Dendritic cell treated with granulocyte-macrophage colony-stimulating factor and Interleukin-4, amounts not matched to agents 40 ng/mL and 50 ng/mL, for 4 days (primary cell): ENCODE measurements at regions of chr12 and their contacts with region 1.

Region 1: DNA sequence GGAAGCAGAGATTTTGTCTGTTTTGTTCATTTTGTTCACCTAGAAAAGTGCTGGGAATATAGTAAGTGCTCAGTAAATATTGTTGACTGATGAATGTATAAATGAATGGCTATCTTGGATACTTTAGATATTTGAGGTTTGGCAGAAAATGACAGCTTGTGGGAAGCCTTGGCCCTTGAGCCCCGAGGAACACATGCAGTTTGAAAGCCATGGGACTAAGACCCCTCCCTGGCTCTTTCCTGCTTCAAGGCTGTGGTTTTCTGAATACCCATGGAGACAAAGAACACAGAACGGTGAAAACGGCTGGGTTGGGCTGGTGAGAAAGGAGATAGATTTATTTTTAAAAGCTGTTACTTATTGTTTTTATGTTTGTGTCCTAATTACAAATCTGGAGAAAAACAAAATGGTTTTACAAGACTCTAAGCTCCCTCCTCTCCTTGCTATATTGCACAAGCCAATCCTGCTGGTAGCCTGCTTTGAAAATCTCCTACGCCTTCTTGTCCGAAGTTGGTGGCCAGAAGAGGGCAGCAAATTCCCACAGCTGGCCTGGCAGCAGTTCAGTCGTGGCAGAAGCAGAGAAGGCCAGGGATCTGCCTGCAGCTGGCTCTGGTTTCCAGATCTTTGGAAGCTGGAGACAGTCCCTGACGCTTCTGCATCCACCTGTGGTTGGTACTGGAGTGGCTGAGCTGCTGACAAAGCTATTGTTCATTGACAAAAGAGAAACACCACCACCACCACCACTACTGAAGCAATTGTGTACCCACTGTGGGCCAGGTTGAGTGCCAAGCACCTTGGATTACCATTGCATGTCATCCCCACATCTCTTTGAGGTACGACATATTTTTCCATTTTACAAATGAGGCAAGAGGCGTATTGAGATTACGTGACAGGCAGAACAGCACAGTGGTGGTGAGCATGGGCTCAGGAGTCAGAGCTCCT is 5.2 kb upstream of the KRT85 start:
- H3K4me3 Mint-ChIP-seq: no peak overlapping the region
- H3K27ac Mint-ChIP-seq: no peak overlapping the region
- H3K4me1 Mint-ChIP-seq: no peaks in the 10 kb centered on the region
- H3K27me3 Mint-ChIP-seq: peaks cover 9% of the 10 kb centered on the region

Region 2: GRCh38 chr12:52338241-52338960 is 34.1 kb before region 1 on chr12:
- intact Hi-C with region 1: no loop called
- H3K4me3 Mint-ChIP-seq: no peak overlapping the region
- H3K27ac Mint-ChIP-seq: no peak overlapping the region
- H3K4me1 Mint-ChIP-seq: no peaks in the 10 kb centered on the region
- H3K27me3 Mint-ChIP-seq: peaks cover 14% of the 10 kb centered on the region

Region 3: DNA sequence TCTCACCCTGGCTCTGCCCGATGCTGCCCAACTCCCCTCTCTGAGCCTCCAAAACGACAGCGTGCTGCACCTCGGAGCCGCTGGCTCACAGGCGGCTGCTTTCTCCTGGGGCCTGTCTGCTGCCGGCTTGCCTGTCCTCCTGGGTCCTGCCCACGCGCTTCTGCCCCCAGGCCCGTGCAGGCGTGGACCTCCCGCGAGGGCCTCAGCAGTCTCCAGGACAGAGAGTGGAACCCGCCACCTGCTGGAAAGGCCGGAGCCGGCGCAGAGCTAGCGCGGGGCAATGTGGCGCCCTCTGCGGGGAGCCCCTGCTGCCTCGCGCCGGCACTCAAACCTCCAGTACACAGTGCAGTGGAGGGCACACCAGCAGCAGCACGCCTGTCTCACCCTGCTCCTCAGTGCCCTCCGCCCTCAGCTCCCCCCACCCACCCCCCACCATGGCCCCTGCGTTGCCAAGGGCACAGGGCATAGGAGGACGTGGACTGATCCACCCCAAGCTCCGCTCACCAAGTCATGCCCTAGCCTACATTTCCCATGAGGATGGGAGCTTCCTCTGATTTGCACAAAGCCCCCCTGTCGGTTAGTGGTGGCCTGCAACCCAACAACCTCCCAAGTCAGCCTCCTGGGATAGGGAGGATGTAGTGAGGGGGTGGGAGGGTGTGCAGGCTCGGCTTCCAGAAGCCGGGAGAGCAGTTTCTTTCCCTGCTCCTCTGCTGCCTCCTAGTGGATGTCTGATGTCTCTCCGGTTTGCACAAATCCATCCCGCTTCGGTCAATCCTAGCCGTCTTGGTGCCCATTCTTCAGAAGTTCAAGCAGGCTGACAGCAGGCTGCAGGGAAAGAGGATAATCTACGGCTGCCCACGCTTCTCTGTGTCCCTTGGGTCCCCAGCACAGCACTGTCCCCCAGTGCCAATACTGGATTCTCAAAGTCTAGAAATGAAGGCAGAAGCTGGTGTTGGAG is 507.2 kb after region 1 on chr12:
- intact Hi-C with region 1: loop called (anchors 1 kb)
- H3K4me3 Mint-ChIP-seq: peak overlapping the region; percentile 67
- H3K27ac Mint-ChIP-seq: peak overlapping the region; percentile 67
- H3K4me1 Mint-ChIP-seq: peaks cover 31% of the 10 kb centered on the region
- H3K27me3 Mint-ChIP-seq: peaks cover 22% of the 10 kb centered on the region